ENCODE measurements at regions of chr1 and their contacts with region 1.

Region 1: GRCh38 chr1:32013386-32014198 is at the start of gene KHDRBS1:
- DNase-seq: peak; percentile 95 to 100
- H3K4me3 ChIP-seq: peak within 1 kb of the TSS; percentile 96 to 99
- H3K27ac ChIP-seq: peak within 1 kb of the TSS; percentile 98 to 100
- H3K4me1 ChIP-seq: peaks cover 9 to 23% of the 10 kb centered on the region in 2 donors
- H3K27me3 ChIP-seq: no peaks in the 10 kb centered on the region
- CTCF ChIP-seq: no peak
- total RNA-seq, gene KHDRBS1: 120 TPM

Region 2: DNA sequence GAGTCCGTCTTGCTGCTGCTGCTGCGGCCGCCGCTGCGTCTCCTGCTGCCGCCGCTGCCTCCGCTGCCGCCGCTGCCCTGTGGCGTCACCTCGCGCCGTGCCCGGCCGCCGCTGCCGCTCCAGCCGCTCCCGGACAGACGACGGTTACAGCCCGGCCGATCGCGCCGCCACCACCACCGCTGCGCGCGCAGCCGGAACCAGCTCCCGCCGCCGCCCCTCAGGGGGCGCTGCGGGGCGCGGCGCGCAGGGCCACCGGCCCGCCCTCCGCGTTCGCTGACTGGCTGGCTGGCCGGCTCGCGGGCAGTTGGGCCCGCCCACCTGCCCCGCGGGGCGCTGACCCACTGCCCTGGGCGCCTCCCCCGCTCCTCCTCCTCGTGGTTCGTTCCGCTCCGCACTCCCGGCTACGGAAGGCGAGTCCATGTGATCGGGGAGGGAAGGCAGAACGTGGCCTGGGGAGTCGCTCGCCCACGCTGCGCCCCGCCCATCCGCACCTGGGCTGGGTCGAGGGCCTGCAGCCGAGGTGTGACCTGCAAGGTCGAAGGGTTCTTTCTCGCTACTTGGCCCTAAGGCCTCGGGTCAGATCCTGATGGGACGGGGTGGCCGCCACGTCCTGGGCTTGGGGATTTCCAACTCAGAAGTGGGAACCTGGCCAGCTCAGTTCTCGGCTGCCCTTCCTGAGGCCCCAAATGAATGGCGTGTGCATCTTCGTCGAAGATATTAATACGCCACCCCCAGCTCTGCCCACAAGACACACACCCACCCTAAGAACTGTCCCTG is 75.2 kb before region 1 on chr1 and contains the start of gene PTP4A2:
- intact Hi-C with region 1: loop called (anchors 1 kb)
- DNase-seq: peak; percentile 77 to 95
- H3K4me3 ChIP-seq: peak within 1 kb of the TSS; percentile 70 to 85
- H3K27ac ChIP-seq: peak within 1 kb of the TSS; percentile 94 to 97
- H3K4me1 ChIP-seq: peaks cover 12 to 26% of the 10 kb centered on the region in 2 donors
- H3K27me3 ChIP-seq: no peaks in the 10 kb centered on the region
- CTCF ChIP-seq: peak in 1 of 3 experiments; percentile 98
- total RNA-seq, gene PTP4A2: 174 TPM

Region 3: DNA sequence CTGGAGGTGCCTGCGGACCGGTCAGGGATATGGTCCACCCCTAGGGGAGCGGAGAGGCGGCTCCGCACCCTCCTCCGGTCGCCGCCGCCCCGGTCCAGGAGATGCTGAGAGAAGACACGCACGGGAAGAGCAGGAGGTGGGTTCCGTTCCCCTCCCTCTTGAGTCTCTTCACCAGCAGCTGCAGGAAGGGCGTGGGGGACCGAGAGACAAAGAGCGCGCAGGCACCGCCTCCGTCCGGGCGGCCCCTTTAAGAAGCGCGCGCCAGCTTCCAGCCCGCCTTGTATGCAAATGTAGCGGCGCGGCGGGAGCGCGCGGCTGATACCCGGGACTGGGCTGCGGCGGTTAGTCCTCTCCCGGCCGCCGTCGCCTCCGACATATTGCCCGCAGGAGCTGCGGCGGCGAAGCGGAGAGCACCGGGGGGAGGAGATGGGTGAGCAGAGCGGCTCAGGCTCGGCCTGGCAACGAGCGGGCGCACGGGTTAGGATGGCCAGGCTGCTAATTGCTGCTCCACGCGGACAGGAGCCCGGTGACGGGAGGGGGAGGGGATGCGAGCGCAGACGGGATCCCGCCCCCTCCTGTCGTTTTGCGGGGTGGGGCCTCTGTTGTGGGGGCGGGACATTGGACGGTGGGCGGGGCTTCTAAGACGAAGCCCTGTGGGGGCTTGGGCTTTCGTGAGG is 59.2 kb after region 1 on chr1 and contains the start of gene TMEM39B:
- intact Hi-C with region 1: loop called (anchors 2 kb)
- DNase-seq: peak; percentile 84 to 98
- H3K4me3 ChIP-seq: peak within 1 kb of the TSS; percentile 75
- H3K27ac ChIP-seq: peak within 1 kb of the TSS; percentile 83 to 89
- H3K4me1 ChIP-seq: peaks cover 13 to 15% of the 10 kb centered on the region in 2 donors
- H3K27me3 ChIP-seq: no peaks in the 10 kb centered on the region
- CTCF ChIP-seq: peak in 2 of 3 experiments; percentile 13 to 22
- total RNA-seq, gene TMEM39B: 2.6 TPM

Measured in ascending aorta (tissue), 2 donors.